ENCODE measurements at regions of chr3 and their contacts with region 1.

Region 1: GRCh38 chr3:195850857-195851543 is 39.3 kb upstream of the MUC4 start:
- DNase-seq: peak; percentile 84
- H3K4me3 ChIP-seq: no peak overlapping the region
- H3K27ac ChIP-seq: no peak overlapping the region
- H3K4me1 ChIP-seq: no peaks in the 10 kb centered on the region
- H3K27me3 ChIP-seq: no peaks in the 10 kb centered on the region
- CTCF ChIP-seq: peak; percentile 100
- POLR2A ChIP-seq: no peak

Region 2: GRCh38 chr3:195542698-195543499 is 308.1 kb before region 1 on chr3 and contains the start of gene PPP1R2:
- CTCF ChIA-PET with region 1: interaction called, 6 read pairs
- POLR2A ChIA-PET with region 1: no interaction called
- dilution Hi-C with region 1: no loop called
- intact Hi-C with region 1: loop called (anchors 10 kb)
- DNase-seq: peak; percentile 92
- H3K4me3 ChIP-seq: peak within 1 kb of the TSS; percentile 30 to 97 (median 93)
- H3K27ac ChIP-seq: peak within 1 kb of the TSS; percentile 61
- H3K4me1 ChIP-seq: peaks cover 33% of the 10 kb centered on the region
- H3K27me3 ChIP-seq: peaks cover 2% of the 10 kb centered on the region in 2 experiments
- CTCF ChIP-seq: no peak
- POLR2A ChIP-seq: peak; percentile 95
- total RNA-seq, gene PPP1R2: 36.2 and 37.3 TPM in 2 replicates

Region 3: GRCh38 chr3:195839282-195840010 is 11.6 kb before region 1 on chr3:
- CTCF ChIA-PET with region 1: interaction called, 25 read pairs
- POLR2A ChIA-PET with region 1: no interaction called
- dilution Hi-C with region 1: no loop called
- intact Hi-C with region 1: no loop called
- DNase-seq: no peak
- H3K4me3 ChIP-seq: no peak overlapping the region
- H3K27ac ChIP-seq: no peak overlapping the region
- H3K4me1 ChIP-seq: no peaks in the 10 kb centered on the region
- H3K27me3 ChIP-seq: peaks cover 2 to 11% of the 10 kb centered on the region in 2 experiments
- CTCF ChIP-seq: no peak
- POLR2A ChIP-seq: no peak

Region 4: GRCh38 chr3:195894780-195895607 is 44.0 kb after region 1 on chr3:
- CTCF ChIA-PET with region 1: interaction called, 454 read pairs
- POLR2A ChIA-PET with region 1: interaction called, 3 read pairs
- dilution Hi-C with region 1: no loop called
- intact Hi-C with region 1: no loop called
- DNase-seq: peak; percentile 77
- H3K4me3 ChIP-seq: peak overlapping the region; percentile 62 to 80 (median 76)
- H3K27ac ChIP-seq: peak overlapping the region; percentile 46
- H3K4me1 ChIP-seq: peaks cover 45% of the 10 kb centered on the region
- H3K27me3 ChIP-seq: no peaks in the 10 kb centered on the region
- CTCF ChIP-seq: peak; percentile 78 to 92
- POLR2A ChIP-seq: peak; percentile 42

Region 5: GRCh38 chr3:196198771-196199753 is 348.1 kb after region 1 on chr3:
- CTCF ChIA-PET with region 1: interaction called, 3 read pairs
- POLR2A ChIA-PET with region 1: no interaction called
- dilution Hi-C with region 1: no loop called
- intact Hi-C with region 1: loop called (anchors 2 kb)
- DNase-seq: no peak
- H3K4me3 ChIP-seq: no peak overlapping the region
- H3K27ac ChIP-seq: no peak overlapping the region
- H3K4me1 ChIP-seq: no peaks in the 10 kb centered on the region
- H3K27me3 ChIP-seq: peaks cover 2% of the 10 kb centered on the region in 2 experiments
- CTCF ChIP-seq: peak in 1 of 2 donors; percentile 9
- POLR2A ChIP-seq: no peak

Region 6: DNA sequence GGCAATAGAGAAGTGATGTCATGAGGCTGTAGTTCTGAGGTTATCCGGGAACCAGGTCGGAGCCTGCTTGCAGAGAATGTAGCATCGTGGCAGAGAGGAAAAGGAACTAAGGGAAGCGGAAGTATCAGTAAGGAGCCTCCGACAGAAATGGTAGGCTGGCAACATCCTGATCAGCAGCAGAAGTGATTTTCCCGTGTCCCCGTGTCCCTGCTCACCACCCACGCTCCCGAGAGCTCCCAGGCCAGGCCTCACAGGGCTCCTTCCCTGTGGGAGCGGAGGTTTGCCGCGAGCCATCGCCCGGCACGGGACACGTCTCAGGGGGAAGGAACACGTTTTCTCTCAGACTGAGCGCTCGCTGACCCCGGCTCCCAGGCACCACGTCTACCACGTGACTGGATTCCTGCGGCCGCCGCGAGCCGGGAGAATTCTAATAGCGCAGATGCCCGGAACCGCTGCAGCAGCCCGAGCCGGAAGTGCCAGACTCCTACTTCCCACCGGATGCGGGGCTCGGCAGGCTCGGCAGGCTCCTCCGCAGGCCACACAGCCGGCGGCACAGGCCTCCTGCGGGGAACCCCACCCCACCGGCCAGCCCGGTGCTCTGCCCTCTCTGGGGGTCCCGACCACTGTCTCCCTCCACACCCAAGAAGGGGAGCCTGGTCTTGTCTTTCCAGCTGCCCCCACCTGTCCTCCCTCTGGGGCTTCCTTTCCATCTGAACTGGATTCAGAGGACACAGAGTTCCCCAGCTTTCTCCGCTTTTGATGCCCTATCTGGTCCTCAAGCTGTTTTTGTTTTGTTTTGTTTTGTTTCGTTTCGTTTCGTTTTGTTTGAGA is 1605.5 kb after region 1 on chr3:
- CTCF ChIA-PET with region 1: no interaction called
- POLR2A ChIA-PET with region 1: no interaction called
- dilution Hi-C with region 1: no loop called
- intact Hi-C with region 1: no loop called
- DNase-seq: peak; percentile 77
- H3K4me3 ChIP-seq: peak overlapping the region in 2 of 3 experiments; percentile 12 to 35
- H3K27ac ChIP-seq: peak overlapping the region; percentile 47
- H3K4me1 ChIP-seq: peaks cover 11% of the 10 kb centered on the region
- H3K27me3 ChIP-seq: no peaks in the 10 kb centered on the region
- CTCF ChIP-seq: no peak
- POLR2A ChIP-seq: peak; percentile 89

Measured in endothelial cell of umbilical vein (primary cell).